Activated CD4-positive, alpha-beta T cell treated with anti-CD3 and anti-CD28 coated beads for 36 hours (primary cell): ENCODE measurements at regions of chr20 and their contacts with region 1.

Region 1: GRCh38 chr20:63894358-63895201 is at the start of gene DNAJC5:
- DNase-seq: peak; percentile 98
- ATAC-seq: peak; percentile 86
- H3K4me3 Mint-ChIP-seq: peak within 1 kb of the TSS; percentile 95
- H3K27ac Mint-ChIP-seq: peak within 1 kb of the TSS; percentile 98
- H3K4me1 Mint-ChIP-seq: peaks cover 40% of the 10 kb centered on the region
- H3K27me3 Mint-ChIP-seq: no peaks in the 10 kb centered on the region
- total RNA-seq, gene DNAJC5: 30.1 to 34.3 TPM

Region 2: GRCh38 chr20:62121776-62122631 is 1772.6 kb before region 1 on chr20 and contains the start of gene LSM14B:
- CTCF ChIA-PET with region 1: no interaction called
- POLR2A ChIA-PET with region 1: no interaction called
- intact Hi-C with region 1: loop called in 1 of 2 experiments (anchors 2 kb)
- DNase-seq: peak; percentile 99
- ATAC-seq: peak; percentile 84
- H3K4me3 Mint-ChIP-seq: peak within 1 kb of the TSS; percentile 80
- H3K27ac Mint-ChIP-seq: peak within 1 kb of the TSS; percentile 91
- H3K4me1 Mint-ChIP-seq: peaks cover 54% of the 10 kb centered on the region
- H3K27me3 Mint-ChIP-seq: no peaks in the 10 kb centered on the region
- total RNA-seq, gene LSM14B: 38.7 TPM

Region 3: DNA sequence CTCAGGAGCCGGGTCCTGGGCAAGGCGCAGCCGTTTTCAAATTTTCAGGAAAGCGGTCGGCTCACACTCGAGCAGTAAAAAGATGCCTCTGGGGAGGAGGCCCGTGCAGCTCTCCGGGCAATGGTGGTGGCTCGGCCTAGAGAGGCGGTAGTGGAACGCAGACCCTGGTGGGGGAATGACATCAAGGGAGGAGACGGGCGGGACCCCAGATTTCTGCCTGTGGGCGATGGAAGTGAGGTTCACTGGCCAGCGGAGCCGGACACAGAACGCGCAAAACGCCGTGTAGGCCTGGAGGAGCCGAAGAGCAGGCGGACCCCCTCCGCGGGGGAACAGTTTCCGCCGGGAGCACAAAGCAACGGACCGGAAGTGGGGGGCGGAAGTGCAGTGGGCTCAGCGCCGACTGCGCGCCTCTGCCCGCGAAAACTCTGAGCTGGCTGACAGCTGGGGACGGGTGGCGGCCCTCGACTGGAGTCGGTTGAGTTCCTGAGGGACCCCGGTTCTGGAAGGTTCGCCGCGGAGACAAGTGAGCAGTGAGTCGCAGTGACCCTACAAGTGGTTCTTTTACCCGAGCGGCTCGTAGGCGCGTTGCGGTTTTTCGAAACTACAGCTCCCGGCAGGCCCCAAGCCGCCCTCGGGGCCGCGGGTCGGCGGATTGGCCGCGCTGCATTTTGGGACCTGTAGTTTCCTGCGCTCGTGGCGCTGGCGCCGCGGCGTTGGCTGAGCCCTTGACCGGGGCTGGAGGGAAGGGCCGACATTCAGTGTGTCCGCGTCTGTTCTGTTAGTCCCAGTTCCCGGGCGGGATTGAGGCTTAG is 236.4 kb before region 1 on chr20 and contains the start of gene RTEL1:
- CTCF ChIA-PET with region 1: no interaction called
- POLR2A ChIA-PET with region 1: no interaction called
- intact Hi-C with region 1: loop called in 1 of 2 experiments (anchors 1 kb)
- DNase-seq: peak; percentile 92
- ATAC-seq: peak; percentile 82
- H3K4me3 Mint-ChIP-seq: peak within 1 kb of the TSS; percentile 95
- H3K27ac Mint-ChIP-seq: peak within 1 kb of the TSS; percentile 94
- H3K4me1 Mint-ChIP-seq: peaks cover 30% of the 10 kb centered on the region
- H3K27me3 Mint-ChIP-seq: no peaks in the 10 kb centered on the region
- total RNA-seq, gene RTEL1: 44.5 to 44.7 TPM

Region 4: DNA sequence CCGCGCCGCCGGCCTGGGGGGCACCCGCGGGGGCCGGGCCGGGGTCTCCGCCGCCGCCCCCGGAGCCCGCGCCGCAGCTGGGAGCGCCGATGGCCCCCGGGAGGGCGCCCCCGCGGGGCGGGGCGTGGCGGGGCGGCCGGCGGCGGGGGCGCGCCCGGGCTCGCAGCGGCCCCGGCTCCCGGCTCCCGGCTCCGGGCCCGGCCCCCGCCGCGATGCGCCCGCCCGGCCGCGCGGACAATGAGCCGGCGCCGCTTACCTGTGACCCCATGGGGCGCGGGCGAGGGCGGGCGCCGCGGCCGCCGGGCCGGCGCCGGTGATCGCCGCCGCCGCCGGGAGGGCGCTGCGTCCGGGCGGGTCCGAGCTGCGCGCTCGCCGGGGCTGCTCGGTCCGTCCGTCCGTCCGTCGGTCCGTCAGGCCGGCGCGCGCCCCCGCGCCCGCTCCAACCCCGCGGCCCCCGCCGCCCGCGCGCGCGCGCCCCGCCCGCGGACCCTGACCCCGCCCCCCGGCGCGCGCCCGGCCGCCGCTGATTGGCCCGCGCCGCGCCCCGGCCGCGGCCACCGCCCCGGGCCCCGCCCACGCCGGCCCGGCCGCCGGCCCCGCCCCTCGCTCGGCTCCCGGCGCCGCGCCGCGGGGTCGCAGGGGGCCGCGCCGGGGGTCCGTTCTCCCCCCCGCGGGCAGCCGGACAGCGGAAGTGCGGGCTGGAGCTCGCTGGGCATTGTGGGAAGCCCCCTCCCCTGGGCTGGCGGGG is 63.6 kb before region 1 on chr20 and contains the start of gene ZBTB46:
- CTCF ChIA-PET with region 1: no interaction called
- POLR2A ChIA-PET with region 1: no interaction called
- intact Hi-C with region 1: loop called in 1 of 2 experiments (anchors 2 kb)
- DNase-seq: peak; percentile 54
- ATAC-seq: peak; percentile 40
- H3K4me3 Mint-ChIP-seq: peak within 1 kb of the TSS; percentile 65
- H3K27ac Mint-ChIP-seq: no peak within 1 kb of the TSS
- H3K4me1 Mint-ChIP-seq: peaks cover 15% of the 10 kb centered on the region
- H3K27me3 Mint-ChIP-seq: peaks cover 30% of the 10 kb centered on the region
- total RNA-seq, gene ZBTB46: 0.88 to 1.3 TPM

Region 5: DNA sequence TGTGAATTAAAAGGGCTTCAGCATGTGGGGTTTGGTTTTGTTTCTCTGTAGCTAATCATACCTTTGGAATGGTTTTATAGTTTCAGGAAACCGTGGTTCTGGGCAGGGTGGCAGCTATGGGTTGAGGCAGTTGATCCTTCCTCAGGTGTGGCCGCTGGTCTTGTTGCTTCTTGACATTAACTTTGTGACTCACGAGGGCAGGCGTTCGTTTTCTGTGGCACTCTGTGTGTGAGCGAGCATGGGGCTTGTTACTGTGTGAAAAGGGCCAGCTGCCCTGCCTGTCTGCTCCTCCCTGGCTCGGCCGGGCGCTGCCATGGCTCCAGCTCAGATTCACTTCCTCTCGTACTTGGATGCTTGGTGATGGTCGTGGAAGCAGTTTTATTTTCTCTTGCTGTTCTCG is 16.6 kb after region 1 on chr20:
- CTCF ChIA-PET with region 1: interaction called, 10 read pairs
- POLR2A ChIA-PET with region 1: no interaction called
- intact Hi-C with region 1: no loop called
- DNase-seq: no peak
- ATAC-seq: no peak
- H3K4me3 Mint-ChIP-seq: no peak overlapping the region
- H3K27ac Mint-ChIP-seq: no peak overlapping the region
- H3K4me1 Mint-ChIP-seq: peaks cover 31% of the 10 kb centered on the region
- H3K27me3 Mint-ChIP-seq: no peaks in the 10 kb centered on the region

Region 6: DNA sequence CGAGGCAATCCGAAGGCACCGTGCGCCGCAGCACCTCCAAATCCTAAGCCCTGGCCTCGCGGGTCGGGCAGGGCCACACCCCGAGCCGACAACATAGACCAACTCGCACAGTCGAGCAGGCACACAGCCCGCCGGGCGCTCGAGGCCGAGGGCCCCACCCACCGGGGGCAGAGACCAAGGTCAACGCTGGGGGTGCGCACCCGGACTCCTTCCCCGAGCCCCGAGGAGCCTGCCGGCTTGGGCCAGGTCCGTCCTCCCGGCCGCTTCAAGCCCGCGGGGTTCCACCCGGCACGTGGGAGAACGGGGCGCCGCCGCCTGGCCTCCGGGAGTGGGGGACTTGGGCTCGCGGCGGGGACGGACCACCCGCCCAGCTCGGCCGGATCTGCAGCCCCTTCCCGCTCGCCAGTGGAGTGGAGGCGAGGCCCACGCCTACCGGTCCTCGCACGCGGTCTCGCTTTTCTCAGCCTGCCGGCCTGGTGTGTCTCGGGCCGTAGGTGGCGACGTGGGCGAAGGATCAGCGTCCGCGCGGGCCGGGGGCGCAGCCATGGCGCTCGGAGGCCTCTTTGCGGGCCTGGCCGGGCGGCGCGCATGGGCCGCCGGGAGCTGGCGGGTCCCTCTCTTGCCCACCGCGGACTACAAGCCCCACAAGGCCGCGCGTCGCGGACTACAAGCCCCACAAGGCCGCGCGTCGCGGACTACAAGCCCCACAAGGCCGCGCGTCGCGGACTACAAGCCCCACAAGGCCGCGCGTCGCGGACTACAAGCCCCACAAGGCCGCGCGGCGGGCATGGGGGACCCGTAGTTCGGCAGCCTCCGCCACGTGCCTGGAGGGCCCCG is 61.5 kb after region 1 on chr20 and contains the start of gene UCKL1:
- CTCF ChIA-PET with region 1: no interaction called
- POLR2A ChIA-PET with region 1: no interaction called
- intact Hi-C with region 1: loop called in 1 of 2 experiments (anchors 1 kb)
- DNase-seq: peak; percentile 95
- ATAC-seq: peak; percentile 78
- H3K4me3 Mint-ChIP-seq: peak within 1 kb of the TSS; percentile 77
- H3K27ac Mint-ChIP-seq: peak within 1 kb of the TSS; percentile 89
- H3K4me1 Mint-ChIP-seq: peaks cover 37% of the 10 kb centered on the region
- H3K27me3 Mint-ChIP-seq: no peaks in the 10 kb centered on the region
- total RNA-seq, gene UCKL1: 28.3 to 32.2 TPM

Region 7: DNA sequence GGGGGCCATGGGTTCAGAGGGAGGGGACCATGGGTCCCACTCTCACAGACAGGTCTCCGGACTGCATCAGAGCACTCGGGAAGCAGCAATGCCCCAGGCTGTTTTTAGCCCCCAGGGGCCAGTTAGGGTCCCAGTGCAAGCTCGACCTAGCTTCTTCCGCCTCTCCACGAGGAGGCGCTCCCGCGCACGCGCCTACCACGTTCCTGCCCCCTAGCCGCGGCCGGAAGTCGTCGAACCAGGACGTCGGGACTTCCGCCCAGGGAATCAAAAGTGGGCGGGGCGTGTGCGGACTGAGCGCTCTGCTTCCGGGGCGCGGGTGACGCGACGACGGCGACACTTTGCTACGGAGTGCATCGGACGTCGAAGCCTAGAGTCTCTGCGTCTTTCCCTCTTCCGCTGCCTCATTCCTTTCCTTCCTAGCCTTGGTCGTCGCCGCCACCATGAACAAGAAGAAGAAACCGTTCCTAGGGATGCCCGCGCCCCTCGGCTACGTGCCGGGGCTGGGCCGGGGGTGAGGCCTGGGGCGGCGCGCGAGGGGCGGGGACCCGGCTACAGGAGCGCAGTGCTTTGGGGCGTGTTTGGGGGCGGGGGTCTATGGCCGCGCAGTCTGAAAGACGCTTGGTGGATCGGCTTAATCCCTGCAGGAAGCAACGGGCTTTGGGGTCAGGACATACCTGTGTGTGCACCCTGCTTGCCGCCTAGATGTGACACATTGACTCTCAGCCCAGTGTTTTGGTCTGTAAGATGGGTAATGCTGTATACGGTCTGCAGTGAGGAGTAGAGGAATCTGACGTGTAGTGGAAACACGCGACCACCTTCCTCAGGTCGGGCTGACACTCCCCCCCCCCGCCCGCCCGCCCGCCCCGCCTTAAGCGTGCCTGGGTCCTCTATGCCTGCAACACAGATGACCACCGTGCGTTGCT is 86.5 kb after region 1 on chr20 and contains the start of gene PRPF6:
- CTCF ChIA-PET with region 1: interaction called, 15 read pairs
- POLR2A ChIA-PET with region 1: no interaction called
- intact Hi-C with region 1: loop called in 1 of 2 experiments (anchors 1 kb)
- DNase-seq: peak; percentile 98
- ATAC-seq: peak; percentile 47
- H3K4me3 Mint-ChIP-seq: peak within 1 kb of the TSS; percentile 97
- H3K27ac Mint-ChIP-seq: peak within 1 kb of the TSS; percentile 98
- H3K4me1 Mint-ChIP-seq: peaks cover 59% of the 10 kb centered on the region
- H3K27me3 Mint-ChIP-seq: no peaks in the 10 kb centered on the region
- total RNA-seq, gene PRPF6: 60.5 to 67.0 TPM